Esophagus muscularis mucosa (tissue), 4 donors: ENCODE measurements at regions of chr13 and their contacts with region 1.

Region 1: DNA sequence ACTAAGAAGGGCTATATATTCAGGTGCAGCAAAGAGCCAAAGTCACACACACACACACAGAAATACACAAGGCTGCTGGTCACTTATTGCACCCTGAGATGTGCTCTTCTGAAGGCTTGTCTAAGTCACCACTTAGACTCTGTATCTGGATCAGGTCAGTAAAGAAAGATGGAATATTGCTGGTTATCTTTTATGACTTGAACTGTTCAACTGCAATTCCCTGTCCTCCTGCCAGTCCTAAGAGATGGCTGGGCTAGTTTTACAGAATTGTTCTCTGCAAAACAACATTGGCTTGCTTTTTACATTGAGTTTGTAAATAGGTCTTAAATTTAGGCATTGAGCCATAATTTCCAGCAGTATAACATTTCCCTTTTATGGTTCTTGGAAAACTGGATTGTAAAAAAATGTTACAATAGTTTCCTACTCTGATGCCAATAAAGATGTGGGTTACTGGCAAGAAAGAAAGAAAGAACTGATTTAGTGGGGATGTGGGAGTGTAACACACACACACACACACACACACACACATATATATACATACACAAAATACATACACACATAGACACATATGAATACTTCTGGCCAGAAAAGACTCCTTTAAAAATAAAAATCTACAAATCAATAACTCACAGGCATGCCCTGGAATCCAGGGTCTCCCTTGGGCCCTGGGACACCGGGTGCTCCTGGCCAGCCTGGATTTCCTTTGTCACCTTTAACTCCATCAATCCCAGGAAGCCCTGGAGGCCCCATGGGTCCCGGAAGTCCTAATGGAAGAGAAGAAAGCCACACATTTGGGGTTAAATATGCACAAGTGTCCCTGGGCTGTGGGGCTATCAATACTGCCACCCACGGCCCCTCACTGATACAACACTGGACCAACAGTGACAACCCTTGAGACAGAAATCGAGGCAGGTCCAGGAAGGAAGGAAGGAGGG is 137.7 kb downstream of the COL4A1 start:
- DNase-seq: no peak
- H3K4me3 ChIP-seq: no peak overlapping the region
- H3K27ac ChIP-seq: peak overlapping the region; percentile 7 to 46 (median 19)
- H3K4me1 ChIP-seq: peaks cover 0 to 12% (median 4%) of the 10 kb centered on the region in 4 donors
- H3K27me3 ChIP-seq: no peaks in the 10 kb centered on the region
- CTCF ChIP-seq: no peak
- EP300 ChIP-seq: no peak
- POLR2A ChIP-seq: no peak

Region 2: GRCh38 chr13:110200276-110200870 is 31.1 kb after region 1 on chr13:
- intact Hi-C with region 1: loop called (anchors 5 kb)
- DNase-seq: no peak
- H3K4me3 ChIP-seq: no peak overlapping the region
- H3K27ac ChIP-seq: no peak overlapping the region
- H3K4me1 ChIP-seq: peaks cover 0 to 14% (median 12%) of the 10 kb centered on the region in 4 donors
- H3K27me3 ChIP-seq: no peaks in the 10 kb centered on the region
- CTCF ChIP-seq: no peak
- EP300 ChIP-seq: no peak
- POLR2A ChIP-seq: no peak

Region 3: GRCh38 chr13:110509971-110510786 is 340.9 kb after region 1 on chr13:
- intact Hi-C with region 1: no loop called
- DNase-seq: no peak
- H3K4me3 ChIP-seq: no peak overlapping the region
- H3K27ac ChIP-seq: peak overlapping the region; percentile 21 to 79 (median 66)
- H3K4me1 ChIP-seq: peaks cover 41 to 56% (median 51%) of the 10 kb centered on the region in 4 donors
- H3K27me3 ChIP-seq: no peaks in the 10 kb centered on the region
- CTCF ChIP-seq: no peak
- EP300 ChIP-seq: no peak
- POLR2A ChIP-seq: no peak